ENCODE measurements at regions of chr17 and their contacts with region 1.

Region 1: GRCh38 chr17:32319548-32319905 is 22.4 kb downstream of the C17orf75 start:
- DNase-seq: peak; percentile 78
- ATAC-seq: peak; percentile 91 to 94

Region 2: DNA sequence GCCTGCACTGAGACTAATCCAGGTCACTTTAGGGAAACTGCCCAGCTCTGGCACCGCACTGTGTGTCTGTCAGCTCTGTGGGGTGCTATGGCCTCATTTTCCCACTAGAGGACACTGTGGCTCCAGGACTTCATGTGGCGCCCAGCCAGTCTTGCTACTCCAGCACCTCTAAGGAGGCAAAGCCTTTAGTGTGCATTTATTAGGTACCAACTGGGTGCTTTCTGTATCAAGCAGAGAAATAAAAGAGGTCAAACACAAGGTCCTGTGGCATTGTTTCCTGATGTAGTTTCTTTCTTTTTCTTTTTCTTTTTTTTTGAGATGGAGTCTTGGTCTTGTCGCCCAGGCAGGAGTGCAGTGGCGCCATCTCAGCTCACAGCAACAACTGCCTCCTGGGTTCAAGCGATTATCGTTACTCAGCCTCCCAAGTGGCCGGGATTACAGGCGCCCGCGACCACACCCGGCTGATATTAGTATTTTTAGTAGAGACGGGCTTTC is 66.4 kb before region 1 on chr17:
- intact Hi-C with region 1: loop called (anchors 1 to 2 kb)
- DNase-seq: peak; percentile 80
- ATAC-seq: peak; percentile 94 to 96